Heart left ventricle (tissue), 16 donors: ENCODE measurements at regions of chr3 and their contacts with region 1.

Region 1: DNA sequence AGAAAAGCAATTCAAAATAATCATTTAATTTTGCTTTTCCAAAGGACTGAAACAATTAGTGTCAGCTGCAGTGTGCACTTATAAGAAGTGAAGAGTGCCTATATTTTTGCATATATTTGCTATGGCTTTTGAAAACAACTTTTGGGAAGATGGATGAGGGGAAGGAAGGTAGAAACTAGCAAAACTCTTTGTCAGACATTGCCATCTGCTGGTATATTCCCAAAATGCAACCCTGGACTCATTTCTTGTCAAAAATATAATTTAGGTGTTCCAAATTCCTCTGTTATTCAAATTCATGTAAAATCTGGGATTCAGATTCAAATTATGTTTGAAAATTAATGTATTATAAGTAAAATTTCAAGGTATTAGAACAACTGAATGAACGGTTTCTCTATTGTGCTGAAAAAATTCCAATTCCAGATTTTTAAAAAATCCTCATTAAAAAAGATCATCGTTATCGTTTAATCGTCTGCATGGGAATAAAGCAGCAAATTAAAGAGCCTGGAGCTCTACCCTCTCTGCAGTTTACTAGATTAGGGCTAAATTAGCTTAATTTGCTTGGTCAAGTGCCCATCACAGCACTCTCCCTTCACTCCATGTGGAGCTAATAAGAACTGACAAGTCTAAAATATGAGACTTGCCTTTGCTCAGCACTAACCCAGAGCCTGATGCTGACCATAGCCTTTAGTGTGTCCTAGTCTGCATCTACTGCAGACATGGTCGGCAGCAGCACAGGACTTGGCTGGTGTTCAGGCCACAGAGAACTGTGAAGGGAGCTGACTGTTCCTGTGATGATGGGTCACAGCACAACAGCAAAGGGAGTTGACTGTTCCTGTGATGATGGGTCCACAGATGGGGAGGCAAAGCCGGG is 67.9 kb upstream of the MITF start:
- DNase-seq: peak in 4 of 5 donors; percentile 22 to 38 (median 28)
- ATAC-seq: peak; percentile 32 to 67 (median 63)
- H3K4me3 ChIP-seq: no peak overlapping the region
- H3K27ac ChIP-seq: no peak overlapping the region
- H3K4me1 ChIP-seq: peaks cover 0 to 13% (median 0%) of the 10 kb centered on the region in 12 donors
- H3K27me3 ChIP-seq: no peaks in the 10 kb centered on the region
- CTCF ChIP-seq: peak; percentile 65 to 90 (median 81)
- POLR2A ChIP-seq: no peak

Region 2: DNA sequence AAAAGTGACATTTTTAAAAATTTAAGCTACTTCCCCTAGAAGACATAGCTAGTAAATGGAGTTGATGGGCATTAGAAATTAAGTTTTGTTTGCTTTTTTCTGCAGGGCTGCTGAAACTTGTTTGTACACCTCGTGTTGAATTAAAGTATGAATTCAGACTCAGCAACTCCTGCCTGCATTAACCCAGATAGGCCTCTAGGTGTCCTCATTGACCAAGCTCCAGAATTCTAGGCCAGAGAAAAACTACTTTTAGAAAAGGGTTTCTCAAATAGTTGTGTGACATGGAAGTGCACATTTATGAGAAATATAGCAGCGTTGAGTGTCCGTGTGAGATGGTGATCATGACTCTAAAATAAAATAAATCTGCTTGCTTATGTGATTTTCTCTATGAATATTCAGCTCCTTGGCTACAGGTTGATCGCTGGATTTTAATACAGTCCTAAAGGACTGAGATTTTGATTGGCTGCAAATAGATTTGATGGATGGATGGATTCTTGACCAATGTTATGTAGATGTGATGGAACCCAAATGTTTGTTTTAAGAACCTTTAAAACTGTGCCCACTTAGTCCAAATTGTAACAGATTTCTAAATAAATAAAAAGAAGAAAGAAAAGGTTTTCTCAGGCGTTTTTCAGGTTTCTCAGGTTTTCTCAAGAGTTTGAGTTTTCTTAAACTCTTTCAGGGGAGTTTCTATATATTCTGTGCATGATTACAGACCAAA is 509.6 kb before region 1 on chr3:
- intact Hi-C with region 1: loop called (anchors 2 to 5 kb)
- DNase-seq: peak in 1 of 5 donors; percentile 23
- ATAC-seq: peak in 3 of 4 donors; percentile 52 to 66 (median 55)
- H3K4me3 ChIP-seq: no peak overlapping the region
- H3K27ac ChIP-seq: no peak overlapping the region
- H3K4me1 ChIP-seq: peaks cover 0 to 4% (median 0%) of the 10 kb centered on the region in 12 donors
- H3K27me3 ChIP-seq: no peaks in the 10 kb centered on the region
- CTCF ChIP-seq: peak; percentile 90 to 99 (median 94)
- POLR2A ChIP-seq: no peak

Region 3: GRCh38 chr3:69324362-69325025 is 346.8 kb before region 1 on chr3:
- intact Hi-C with region 1: loop called in 9 of 10 experiments (anchors 2 to 10 kb)
- DNase-seq: peak in 1 of 5 donors; percentile 40
- ATAC-seq: peak in 3 of 4 donors; percentile 23 to 60 (median 32)
- H3K4me3 ChIP-seq: no peak overlapping the region
- H3K27ac ChIP-seq: peak overlapping the region in 3 of 12 donors; percentile 23 to 90 (median 83)
- H3K4me1 ChIP-seq: peaks cover 0 to 97% (median 42%) of the 10 kb centered on the region in 12 donors
- H3K27me3 ChIP-seq: no peaks in the 10 kb centered on the region
- CTCF ChIP-seq: peak in 11 of 12 donors; percentile 29 to 64 (median 51)
- POLR2A ChIP-seq: no peak

Region 4: GRCh38 chr3:69439643-69440270 is 231.6 kb before region 1 on chr3:
- intact Hi-C with region 1: loop called in 7 of 10 experiments (anchors 5 to 10 kb)
- DNase-seq: no peak
- ATAC-seq: peak in 2 of 4 donors; percentile 42 to 59
- H3K4me3 ChIP-seq: peak overlapping the region in 6 of 12 donors; percentile 8 to 39 (median 23)
- H3K27ac ChIP-seq: peak overlapping the region in 1 of 12 donors; percentile 16
- H3K4me1 ChIP-seq: peaks cover 0 to 20% (median 0%) of the 10 kb centered on the region in 12 donors
- H3K27me3 ChIP-seq: no peaks in the 10 kb centered on the region
- CTCF ChIP-seq: peak; percentile 26 to 76 (median 64)
- POLR2A ChIP-seq: no peak

Region 5: GRCh38 chr3:69451594-69451993 is 219.7 kb before region 1 on chr3:
- intact Hi-C with region 1: loop called in 4 of 10 experiments (anchors 5 to 10 kb)
- DNase-seq: no peak
- ATAC-seq: peak in 3 of 4 donors; percentile 46 to 72 (median 47)
- H3K4me3 ChIP-seq: no peak overlapping the region
- H3K27ac ChIP-seq: peak overlapping the region in 1 of 12 donors; percentile 14
- H3K4me1 ChIP-seq: peaks cover 0 to 15% (median 0%) of the 10 kb centered on the region in 12 donors
- H3K27me3 ChIP-seq: no peaks in the 10 kb centered on the region
- CTCF ChIP-seq: peak in 7 of 12 donors; percentile 8 to 33 (median 19)
- POLR2A ChIP-seq: no peak

Region 6: GRCh38 chr3:69855436-69856162 is 184.3 kb after region 1 on chr3:
- intact Hi-C with region 1: no loop called
- DNase-seq: no peak
- ATAC-seq: peak in 3 of 4 donors; percentile 41 to 69 (median 57)
- H3K4me3 ChIP-seq: no peak overlapping the region
- H3K27ac ChIP-seq: peak overlapping the region in 9 of 12 donors; percentile 4 to 64 (median 42)
- H3K4me1 ChIP-seq: peaks cover 0 to 55% (median 19%) of the 10 kb centered on the region in 12 donors
- H3K27me3 ChIP-seq: no peaks in the 10 kb centered on the region
- CTCF ChIP-seq: peak in 11 of 12 donors; percentile 26 to 64 (median 55)
- POLR2A ChIP-seq: no peak

Region 7: GRCh38 chr3:70040386-70040785 is 369.1 kb after region 1 on chr3:
- intact Hi-C with region 1: no loop called
- DNase-seq: no peak
- ATAC-seq: no peak
- H3K4me3 ChIP-seq: no peak overlapping the region
- H3K27ac ChIP-seq: no peak overlapping the region
- H3K4me1 ChIP-seq: no peaks in the 10 kb centered on the region
- H3K27me3 ChIP-seq: peaks cover 0 to 9% (median 0%) of the 10 kb centered on the region in 9 donors
- CTCF ChIP-seq: no peak
- POLR2A ChIP-seq: no peak